ENCODE measurements at regions of chr6 and their contacts with region 1.

Region 1: DNA sequence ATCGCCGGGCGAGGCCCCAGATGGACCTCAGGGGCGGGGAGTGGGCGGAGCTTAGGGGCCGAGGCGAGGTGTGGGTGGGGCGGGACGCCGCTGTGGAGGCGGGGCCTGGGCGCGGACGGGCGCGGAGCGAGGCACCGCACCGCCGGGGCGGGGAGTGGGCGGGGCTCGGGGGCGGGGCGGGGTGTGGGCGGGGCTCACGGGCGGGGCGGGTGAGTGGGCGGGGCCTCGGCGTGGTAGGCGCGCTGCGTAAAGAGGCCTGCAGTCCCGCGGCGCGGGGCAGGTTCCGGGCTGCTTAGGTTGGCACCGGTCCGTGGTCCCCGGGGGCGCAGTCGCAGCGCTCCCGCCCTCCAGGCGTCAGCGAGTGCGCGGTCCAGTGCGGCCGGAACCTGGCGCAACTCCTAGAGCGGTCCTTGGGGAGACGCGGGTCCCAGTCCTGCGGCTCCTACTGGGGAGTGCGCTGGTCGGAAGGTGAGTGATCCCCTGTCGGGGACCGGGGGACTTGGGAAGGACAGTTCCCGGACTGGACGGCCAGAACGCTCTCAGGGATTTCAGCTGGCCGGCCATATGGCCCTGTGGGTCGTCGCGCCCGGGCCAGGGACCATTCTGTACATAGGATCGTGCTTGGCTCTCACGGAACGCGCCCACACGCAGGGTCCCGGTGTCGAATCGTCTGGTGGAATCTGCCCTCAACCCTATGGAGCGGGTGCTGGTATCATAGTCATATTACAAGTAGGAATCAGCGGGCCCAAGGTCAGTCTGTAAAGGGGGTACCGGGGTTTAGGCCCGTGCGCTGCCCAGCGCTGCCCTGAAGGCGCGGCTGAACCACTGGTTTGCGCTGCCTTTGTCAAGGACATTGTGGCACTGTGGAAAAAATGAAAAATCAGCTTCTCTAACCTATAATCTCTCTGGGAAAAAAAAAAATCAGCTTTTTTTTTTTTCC is at the start of gene NQO2:
- DNase-seq: peak; percentile 98
- total RNA-seq, gene NQO2: 37.9 TPM

Region 2: GRCh38 chr6:3023663-3024483 is 24.0 kb after region 1 on chr6:
- intact Hi-C with region 1: loop called (anchors 1 kb)
- DNase-seq: peak; percentile 98

Measured in cardiac septum (tissue), 1 donor.